ENCODE measurements at regions of chr11 and their contacts with region 1.

Region 1: GRCh38 chr11:36149538-36150242 is 139.5 kb downstream of the COMMD9 start:
- DNase-seq: peak; percentile 95 to 98 (median 98)
- H3K4me3 ChIP-seq: no peak overlapping the region
- H3K4me3 Mint-ChIP-seq: peak overlapping the region; percentile 13 to 80
- H3K27ac ChIP-seq: peak overlapping the region; percentile 57 to 82
- H3K27ac Mint-ChIP-seq: peak overlapping the region; percentile 86 to 99 (median 93)
- H3K4me1 ChIP-seq: peaks cover 13 to 14% of the 10 kb centered on the region in 2 donors
- H3K4me1 Mint-ChIP-seq: peaks cover 26% of the 10 kb centered on the region
- H3K27me3 ChIP-seq: no peaks in the 10 kb centered on the region
- H3K27me3 Mint-ChIP-seq: peaks cover 0 to 3% (median 2%) of the 10 kb centered on the region in 3 donors
- CTCF ChIP-seq: peak; percentile 70

Region 2: GRCh38 chr11:35662649-35663407 is 486.9 kb before region 1 on chr11 and contains the start of gene TRIM44:
- intact Hi-C with region 1: loop called in 1 of 2 experiments (anchors 5 kb)
- DNase-seq: peak; percentile 85 to 93 (median 92)
- H3K4me3 ChIP-seq: peak within 1 kb of the TSS; percentile 79 to 95 (median 92)
- H3K4me3 Mint-ChIP-seq: peak within 1 kb of the TSS; percentile 91 to 98
- H3K27ac ChIP-seq: peak within 1 kb of the TSS; percentile 95 to 96
- H3K27ac Mint-ChIP-seq: peak within 1 kb of the TSS; percentile 92 to 99 (median 99)
- H3K4me1 ChIP-seq: peaks cover 20 to 23% of the 10 kb centered on the region in 2 donors
- H3K4me1 Mint-ChIP-seq: peaks cover 30% of the 10 kb centered on the region
- H3K27me3 ChIP-seq: peaks cover 10 to 20% of the 10 kb centered on the region in 2 donors
- H3K27me3 Mint-ChIP-seq: peaks cover 10 to 34% (median 31%) of the 10 kb centered on the region in 3 donors
- CTCF ChIP-seq: no peak
- polyA plus RNA-seq, gene TRIM44: 25.3 to 47.1 (median 45.9) TPM

Region 3: GRCh38 chr11:35932681-35933319 is 216.9 kb before region 1 on chr11:
- intact Hi-C with region 1: loop called in 1 of 2 experiments (anchors 10 kb)
- DNase-seq: peak; percentile 85 to 96 (median 90)
- H3K4me3 ChIP-seq: peak overlapping the region in 2 of 3 experiments; percentile 13 to 50
- H3K4me3 Mint-ChIP-seq: peak overlapping the region in 1 of 2 donors; percentile 69
- H3K27ac ChIP-seq: peak overlapping the region; percentile 73 to 77
- H3K27ac Mint-ChIP-seq: peak overlapping the region; percentile 85 to 97 (median 92)
- H3K4me1 ChIP-seq: peaks cover 49 to 55% of the 10 kb centered on the region in 2 donors
- H3K4me1 Mint-ChIP-seq: peaks cover 60% of the 10 kb centered on the region
- H3K27me3 ChIP-seq: no peaks in the 10 kb centered on the region
- H3K27me3 Mint-ChIP-seq: peaks cover 0 to 4% (median 2%) of the 10 kb centered on the region in 3 donors
- CTCF ChIP-seq: no peak

Region 4: GRCh38 chr11:36465449-36466163 is 315.9 kb after region 1 on chr11:
- intact Hi-C with region 1: no loop called
- DNase-seq: no peak
- H3K4me3 ChIP-seq: no peak overlapping the region
- H3K4me3 Mint-ChIP-seq: no peak overlapping the region
- H3K27ac ChIP-seq: no peak overlapping the region
- H3K27ac Mint-ChIP-seq: peak overlapping the region in 1 of 7 donors; percentile 38
- H3K4me1 ChIP-seq: peaks cover 0 to 9% of the 10 kb centered on the region in 2 donors
- H3K4me1 Mint-ChIP-seq: peaks cover 11% of the 10 kb centered on the region
- H3K27me3 ChIP-seq: no peaks in the 10 kb centered on the region
- H3K27me3 Mint-ChIP-seq: peaks cover 0 to 3% (median 0%) of the 10 kb centered on the region in 3 donors
- CTCF ChIP-seq: no peak